ENCODE measurements at regions of chr16 and their contacts with region 1.

Region 1: DNA sequence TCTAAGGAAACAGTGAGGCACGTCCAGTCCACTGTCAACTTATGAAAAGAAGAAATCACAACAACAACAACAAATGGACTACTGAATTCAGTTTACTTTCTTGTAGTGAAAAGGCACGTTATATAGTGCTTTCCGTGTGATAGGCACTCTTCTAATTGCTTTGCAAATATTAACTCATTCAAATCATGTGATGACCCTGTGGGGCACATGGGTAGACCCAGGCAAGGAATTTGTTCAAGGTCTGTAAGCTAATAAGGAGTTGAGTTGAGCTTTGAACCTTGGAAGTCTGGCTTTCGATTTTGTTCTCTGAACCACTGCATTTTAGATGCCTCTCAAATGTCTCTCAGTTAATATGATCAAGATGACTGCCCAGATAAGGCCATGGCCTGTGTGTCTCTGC is 295.1 kb upstream of the RBFOX1 start:
- DNase-seq: no peak
- H3K4me3 ChIP-seq: no peak overlapping the region
- H3K27ac ChIP-seq: no peak overlapping the region
- H3K4me1 ChIP-seq: no peaks in the 10 kb centered on the region
- H3K27me3 ChIP-seq: peaks cover 16% of the 10 kb centered on the region; the same call in 1 of the 2 replicates
- CTCF ChIP-seq: no peak

Region 2: DNA sequence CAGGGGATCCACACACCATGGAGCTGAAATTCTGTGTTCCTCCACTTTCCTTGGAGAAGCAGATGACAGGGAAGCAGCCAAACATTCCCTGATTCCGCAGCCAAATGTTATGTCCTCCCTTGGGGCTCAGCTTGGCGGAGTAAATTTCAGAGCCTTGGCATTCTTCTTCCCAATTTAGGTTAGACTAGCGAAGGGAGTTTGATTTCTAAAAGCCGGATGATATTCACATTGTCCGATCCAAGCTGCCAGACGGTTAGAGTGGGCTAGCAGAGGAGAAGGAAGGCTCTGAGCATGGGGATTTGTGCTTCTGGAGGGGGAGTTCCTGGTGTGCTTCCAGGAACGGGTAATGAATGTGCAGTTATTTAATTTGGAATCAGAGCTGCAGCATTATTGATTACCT is 1559.5 kb before region 1 on chr16:
- CTCF ChIA-PET with region 1: interaction called, 10 read pairs
- POLR2A ChIA-PET with region 1: no interaction called
- intact Hi-C with region 1: no loop called
- DNase-seq: no peak
- H3K4me3 ChIP-seq: no peak overlapping the region
- H3K27ac ChIP-seq: no peak overlapping the region
- H3K4me1 ChIP-seq: no peaks in the 10 kb centered on the region
- H3K27me3 ChIP-seq: peaks cover 42% of the 10 kb centered on the region
- CTCF ChIP-seq: no peak

Region 3: GRCh38 chr16:7541026-7541425 is 503.5 kb after region 1 on chr16:
- CTCF ChIA-PET with region 1: no interaction called
- POLR2A ChIA-PET with region 1: no interaction called
- intact Hi-C with region 1: no loop called
- DNase-seq: no peak
- H3K4me3 ChIP-seq: no peak overlapping the region
- H3K27ac ChIP-seq: no peak overlapping the region
- H3K4me1 ChIP-seq: no peaks in the 10 kb centered on the region
- H3K27me3 ChIP-seq: peaks cover 4% of the 10 kb centered on the region; the same call in 1 of the 2 replicates
- CTCF ChIP-seq: no peak